PC-9 (cell line): ENCODE measurements at regions of chrX and their contacts with region 1.

Region 1: DNA sequence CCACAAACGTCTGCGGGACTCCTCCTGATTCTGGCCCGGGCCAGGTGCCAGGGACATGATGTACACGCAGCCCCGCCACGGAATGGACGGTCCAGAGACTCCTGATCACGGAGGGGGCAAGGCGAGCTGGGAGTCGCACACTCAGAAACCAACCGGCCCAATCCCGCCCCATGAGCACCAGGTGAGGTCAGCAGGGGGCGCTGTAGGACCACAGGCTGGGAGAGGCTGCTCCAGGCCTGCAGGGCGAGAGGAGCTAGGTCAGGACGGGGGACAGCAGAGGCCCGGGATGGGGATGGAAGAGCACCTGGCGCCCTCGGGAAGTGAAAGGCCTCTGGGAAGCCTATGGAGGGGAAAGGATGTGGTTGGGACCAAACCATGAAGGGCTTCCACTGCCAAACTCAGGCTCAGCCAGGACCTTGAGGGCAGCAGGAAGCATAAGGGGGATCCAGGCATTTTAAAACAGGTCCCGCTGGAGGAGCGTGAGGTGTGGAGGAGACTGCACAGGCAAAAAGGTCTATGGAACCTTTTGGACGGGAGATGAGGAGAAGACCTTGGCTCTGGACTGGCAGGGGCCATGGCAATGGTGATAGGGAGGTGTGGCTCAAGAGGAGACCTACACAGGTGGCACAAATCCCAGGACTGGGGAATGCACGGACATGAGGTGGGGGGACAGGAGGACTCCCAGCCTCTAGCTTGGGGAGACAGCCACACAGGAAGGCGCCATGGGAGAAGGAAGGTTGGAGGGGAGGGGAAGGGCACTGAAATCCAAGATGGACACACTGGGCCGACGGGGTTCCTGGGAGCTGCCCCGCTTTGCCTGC is 79.2 kb downstream of the MTMR1 start:
- DNase-seq: peak; percentile 51 to 82
- H3K4me3 ChIP-seq: no peak overlapping the region
- H3K27ac ChIP-seq: no peak overlapping the region
- H3K4me1 ChIP-seq: no peaks in the 10 kb centered on the region
- H3K27me3 ChIP-seq: no peaks in the 10 kb centered on the region
- CTCF ChIP-seq: peak; percentile 97

Region 2: DNA sequence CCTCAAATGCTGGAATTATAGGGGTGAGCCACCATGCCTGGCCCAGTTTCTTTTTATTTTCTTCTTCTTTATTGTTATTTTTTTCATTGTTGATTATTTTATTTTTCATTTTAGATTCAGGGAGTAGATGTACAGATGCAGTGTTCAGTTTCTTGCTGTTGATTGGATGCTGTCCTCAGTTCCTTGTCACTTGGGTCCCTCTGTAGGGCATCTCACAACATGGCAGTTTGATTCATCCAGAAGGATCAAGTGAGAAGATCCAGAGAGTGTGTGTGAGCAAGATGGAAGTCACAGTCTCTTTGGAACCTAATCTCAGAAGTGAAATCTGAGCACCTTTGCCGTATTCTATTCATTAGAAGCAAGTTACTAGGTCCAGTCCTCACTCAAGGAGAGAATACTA is 231.7 kb after region 1 on chrX:
- CTCF ChIA-PET with region 1: no interaction called
- POLR2A ChIA-PET with region 1: no interaction called
- intact Hi-C with region 1: loop called (anchors 2 kb)
- DNase-seq: no peak
- H3K4me3 ChIP-seq: no peak overlapping the region
- H3K27ac ChIP-seq: no peak overlapping the region
- H3K4me1 ChIP-seq: no peaks in the 10 kb centered on the region
- H3K27me3 ChIP-seq: peaks cover 7% of the 10 kb centered on the region; the same call in 1 of the 2 replicates
- CTCF ChIP-seq: peak; percentile 56; the same call in 1 of the 2 replicates

Region 3: DNA sequence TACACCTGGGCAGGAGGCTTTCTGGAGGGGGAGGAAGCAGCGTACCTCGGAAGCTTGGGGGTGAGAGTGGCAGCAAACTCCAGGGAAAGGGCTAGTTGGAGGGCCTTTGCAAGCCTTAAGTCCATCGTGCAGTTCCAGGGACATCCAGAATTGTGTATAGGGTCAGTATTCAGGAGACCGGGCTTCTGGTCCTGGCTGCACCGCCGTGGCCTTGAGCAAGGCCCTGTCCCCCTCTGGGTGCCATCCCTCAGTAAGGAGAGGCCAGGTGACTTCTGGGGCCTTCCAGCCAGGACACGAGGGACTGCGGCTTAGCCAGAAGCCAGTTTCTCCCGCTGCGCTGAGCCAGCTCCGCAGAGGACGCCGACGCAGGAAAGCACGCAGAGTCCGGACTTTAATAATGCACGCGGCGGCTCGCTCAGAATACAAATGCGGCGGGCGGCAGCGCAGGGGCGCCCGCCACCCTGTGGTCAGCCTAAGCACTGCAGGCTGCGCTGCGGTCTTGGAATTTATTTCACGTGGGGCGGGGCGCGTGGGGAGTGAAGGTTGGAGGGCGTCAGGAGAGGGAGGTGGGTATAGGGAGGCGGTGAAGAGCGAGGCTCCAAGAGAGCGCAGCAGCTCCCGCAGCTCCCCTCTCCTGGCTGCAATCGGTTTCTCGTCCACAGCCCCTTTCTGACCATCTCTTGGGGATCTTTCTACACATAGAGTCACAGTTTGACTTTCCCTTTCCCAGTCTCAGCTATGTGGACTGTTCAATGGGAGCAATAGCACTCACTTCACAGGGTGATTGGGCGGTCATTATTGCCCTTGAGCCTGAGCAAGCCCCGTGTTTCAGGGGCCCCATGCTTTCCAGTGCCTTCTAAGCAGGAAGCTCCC is 310.0 kb after region 1 on chrX:
- CTCF ChIA-PET with region 1: interaction called, 21 read pairs
- POLR2A ChIA-PET with region 1: no interaction called
- intact Hi-C with region 1: loop called (anchors 1 kb)
- DNase-seq: peak; percentile 40 to 68
- H3K4me3 ChIP-seq: no peak overlapping the region
- H3K27ac ChIP-seq: no peak overlapping the region
- H3K4me1 ChIP-seq: no peaks in the 10 kb centered on the region
- H3K27me3 ChIP-seq: peaks cover 81% of the 10 kb centered on the region
- CTCF ChIP-seq: peak; percentile 99

Region 4: GRCh38 chrX:151206871-151207270 is 434.5 kb after region 1 on chrX:
- CTCF ChIA-PET with region 1: no interaction called
- POLR2A ChIA-PET with region 1: no interaction called
- intact Hi-C with region 1: no loop called
- DNase-seq: no peak
- H3K4me3 ChIP-seq: no peak overlapping the region
- H3K27ac ChIP-seq: no peak overlapping the region
- H3K4me1 ChIP-seq: no peaks in the 10 kb centered on the region
- H3K27me3 ChIP-seq: no peaks in the 10 kb centered on the region; the same call in 1 of the 2 replicates
- CTCF ChIP-seq: no peak